Activated B cell treated with CpG ODN at 0.5 μM for 24 hours (primary cell): ENCODE measurements at regions of chr13 and their contacts with region 1.

Region 1: GRCh38 chr13:24512197-24512907 is at the start of gene PARP4:
- DNase-seq: peak; percentile 70
- ATAC-seq: peak; percentile 81
- H3K4me3 Mint-ChIP-seq: peak within 1 kb of the TSS; percentile 92
- H3K27ac Mint-ChIP-seq: peak within 1 kb of the TSS; percentile 88
- H3K4me1 Mint-ChIP-seq: peaks cover 24% of the 10 kb centered on the region
- H3K27me3 Mint-ChIP-seq: no peaks in the 10 kb centered on the region
- CTCF ChIP-seq: no peak
- total RNA-seq, gene PARP4: 50.0 and 56.7 TPM in 2 replicates

Region 2: GRCh38 chr13:23621316-23621645 is 891.1 kb before region 1 on chr13:
- CTCF ChIA-PET with region 1: no interaction called
- POLR2A ChIA-PET with region 1: no interaction called
- intact Hi-C with region 1: no loop called
- DNase-seq: no peak
- ATAC-seq: no peak
- H3K4me3 Mint-ChIP-seq: no peak overlapping the region
- H3K27ac Mint-ChIP-seq: no peak overlapping the region
- H3K4me1 Mint-ChIP-seq: no peaks in the 10 kb centered on the region
- H3K27me3 Mint-ChIP-seq: peaks cover 4% of the 10 kb centered on the region
- CTCF ChIP-seq: no peak

Region 3: DNA sequence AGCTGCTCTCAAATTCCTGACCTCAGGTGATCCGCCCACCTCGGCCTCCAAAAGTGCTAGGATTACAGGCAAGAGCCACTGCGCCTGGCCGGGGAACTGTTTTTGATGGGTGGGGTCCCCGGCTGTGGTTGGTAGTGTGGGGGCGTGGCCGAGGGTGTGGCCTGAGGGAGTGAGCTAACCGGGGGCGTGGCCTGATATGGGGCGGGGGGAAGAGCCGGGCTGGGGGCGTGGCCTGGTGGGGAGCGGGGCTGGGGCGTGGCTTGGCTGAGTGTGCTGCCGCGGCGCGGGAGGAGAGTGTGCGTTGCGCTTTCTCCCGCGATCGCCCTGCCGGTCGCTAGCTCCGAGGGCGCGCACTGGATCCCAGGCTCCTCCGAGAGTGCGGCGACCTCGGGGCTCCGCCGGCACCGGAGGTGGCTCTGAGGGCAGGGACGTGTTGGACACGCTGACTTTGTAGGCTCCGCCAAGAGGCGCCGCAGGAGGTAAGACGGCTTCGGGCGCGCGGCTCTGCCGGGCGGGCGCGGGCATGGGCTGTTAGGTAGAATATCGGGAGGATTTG is 351.8 kb before region 1 on chr13 and contains the start of gene SPATA13:
- CTCF ChIA-PET with region 1: no interaction called
- POLR2A ChIA-PET with region 1: no interaction called
- intact Hi-C with region 1: loop called (anchors 5 kb)
- DNase-seq: peak; percentile 86
- ATAC-seq: peak; percentile 98
- H3K4me3 Mint-ChIP-seq: peak within 1 kb of the TSS; percentile 83
- H3K27ac Mint-ChIP-seq: no peak within 1 kb of the TSS
- H3K4me1 Mint-ChIP-seq: peaks cover 18% of the 10 kb centered on the region
- H3K27me3 Mint-ChIP-seq: peaks cover 11% of the 10 kb centered on the region
- CTCF ChIP-seq: no peak
- total RNA-seq, gene SPATA13: 10.6 and 11.8 TPM in 2 replicates

Region 4: GRCh38 chr13:24528816-24529398 is 16.6 kb after region 1 on chr13:
- CTCF ChIA-PET with region 1: no interaction called
- POLR2A ChIA-PET with region 1: no interaction called
- intact Hi-C with region 1: no loop called
- DNase-seq: no peak
- ATAC-seq: no peak
- H3K4me3 Mint-ChIP-seq: no peak overlapping the region
- H3K27ac Mint-ChIP-seq: no peak overlapping the region
- H3K4me1 Mint-ChIP-seq: no peaks in the 10 kb centered on the region
- H3K27me3 Mint-ChIP-seq: peaks cover 36% of the 10 kb centered on the region
- CTCF ChIP-seq: no peak

Region 5: DNA sequence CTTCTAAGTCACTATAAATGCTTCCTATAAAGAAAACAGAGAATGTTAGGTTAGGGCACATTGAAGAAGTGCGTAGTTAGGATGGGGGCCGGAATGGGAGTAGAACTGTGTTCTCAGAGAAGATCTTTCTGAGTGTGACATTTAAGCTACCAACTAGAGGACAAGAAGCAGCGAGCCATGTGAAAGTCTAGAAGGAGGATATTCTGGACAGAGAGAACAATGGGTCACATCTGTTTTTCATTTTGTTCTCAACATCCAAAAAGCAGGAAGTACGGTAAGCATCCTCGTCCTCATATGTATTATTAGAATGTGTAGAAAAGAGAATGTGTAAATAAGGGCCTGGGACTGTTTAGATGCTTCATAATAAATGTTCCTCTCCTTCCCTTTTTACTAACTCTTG is 44.7 kb after region 1 on chr13:
- CTCF ChIA-PET with region 1: no interaction called
- POLR2A ChIA-PET with region 1: no interaction called
- intact Hi-C with region 1: loop called (anchors 5 kb)
- DNase-seq: no peak
- ATAC-seq: no peak
- H3K4me3 Mint-ChIP-seq: no peak overlapping the region
- H3K27ac Mint-ChIP-seq: no peak overlapping the region
- H3K4me1 Mint-ChIP-seq: no peaks in the 10 kb centered on the region
- H3K27me3 Mint-ChIP-seq: peaks cover 42% of the 10 kb centered on the region
- CTCF ChIP-seq: no peak

Region 6: DNA sequence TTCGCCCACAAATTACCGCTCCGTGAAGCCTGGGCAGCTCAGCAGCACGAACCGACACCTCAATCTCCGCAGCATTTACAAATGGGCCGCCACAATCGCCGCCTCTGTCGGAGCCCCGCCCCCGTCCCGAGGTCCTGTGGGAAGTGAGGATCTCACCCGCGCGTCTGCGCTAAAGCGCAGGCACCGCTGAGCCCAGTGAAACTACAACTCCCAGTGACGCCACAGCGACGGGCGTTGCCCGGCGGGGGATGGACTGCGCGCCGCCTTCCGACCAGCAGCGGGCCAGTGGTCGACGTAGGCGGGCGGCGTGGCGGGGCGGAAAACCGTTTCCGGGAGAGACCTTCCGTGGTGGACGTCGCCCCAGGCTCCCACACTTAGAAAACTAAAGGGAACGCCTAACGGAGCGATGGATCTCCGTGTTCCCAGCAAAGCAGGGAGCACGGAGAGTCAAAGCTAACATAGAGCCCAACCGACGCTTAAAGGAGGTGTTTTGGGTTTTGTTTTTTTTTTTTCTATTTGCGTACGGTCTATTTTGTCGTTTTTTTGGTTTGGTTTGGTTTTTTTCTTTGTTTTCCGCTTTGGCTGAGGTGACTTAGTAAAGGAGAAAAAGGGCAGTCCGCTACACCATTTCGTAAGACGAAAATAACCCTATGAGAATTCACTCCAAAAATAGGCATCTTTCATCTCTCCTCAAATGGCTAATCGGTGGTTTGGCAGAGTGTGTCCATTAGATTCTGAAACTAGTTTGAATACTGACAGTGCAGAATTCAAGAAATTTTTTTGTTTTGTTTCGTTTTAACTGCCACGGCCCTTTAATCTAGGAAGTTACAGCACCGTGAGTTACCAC is 410.6 kb after region 1 on chr13:
- CTCF ChIA-PET with region 1: no interaction called
- POLR2A ChIA-PET with region 1: interaction called, 3 read pairs
- intact Hi-C with region 1: loop called (anchors 1 kb)
- DNase-seq: peak; percentile 91
- ATAC-seq: peak; percentile 97
- H3K4me3 Mint-ChIP-seq: peak overlapping the region; percentile 91
- H3K27ac Mint-ChIP-seq: peak overlapping the region; percentile 97
- H3K4me1 Mint-ChIP-seq: peaks cover 16% of the 10 kb centered on the region
- H3K27me3 Mint-ChIP-seq: no peaks in the 10 kb centered on the region
- CTCF ChIP-seq: no peak